Heart right ventricle (tissue), 16 donors: ENCODE measurements at regions of chr2 and their contacts with region 1.

Region 1: DNA sequence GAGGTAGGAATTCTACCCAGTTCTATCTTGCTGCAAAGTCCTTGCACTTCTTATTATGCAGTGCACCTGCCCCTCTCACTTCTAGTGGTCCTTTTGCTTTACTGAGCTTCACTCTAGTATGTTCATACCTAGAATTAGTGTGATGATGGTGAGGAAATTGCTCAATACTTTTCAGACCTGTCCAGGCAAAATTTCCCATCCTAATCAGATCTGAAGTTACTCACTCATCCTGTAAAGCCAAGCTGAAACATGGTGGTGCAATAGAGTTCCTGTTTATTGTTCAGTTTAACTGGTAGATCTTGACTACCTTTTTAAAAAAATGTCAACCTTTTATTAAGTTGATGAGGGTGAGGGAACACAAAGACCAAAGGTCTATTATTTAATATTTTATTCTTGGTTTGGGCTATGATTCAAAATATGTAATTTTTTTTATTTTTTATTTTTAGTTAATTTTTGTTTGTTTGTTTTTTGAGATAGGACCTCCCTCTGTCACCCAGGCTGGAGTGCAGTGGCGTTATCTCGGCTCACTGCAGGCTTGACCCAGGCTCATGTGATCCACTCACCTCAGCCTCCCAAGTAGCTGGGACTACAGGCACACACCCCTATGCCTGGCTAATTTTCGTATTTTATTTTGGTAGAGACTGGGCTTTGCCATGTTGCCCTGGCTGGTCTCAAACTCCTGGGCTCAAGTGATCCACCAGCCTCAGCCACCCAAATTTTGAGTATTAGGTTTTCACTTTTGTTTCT is 12.8 kb upstream of the FIGN start:
- DNase-seq: no peak
- ATAC-seq: no peak
- H3K4me3 ChIP-seq: no peak overlapping the region
- H3K27ac ChIP-seq: no peak overlapping the region
- H3K4me1 ChIP-seq: no peaks in the 10 kb centered on the region
- H3K27me3 ChIP-seq: no peaks in the 10 kb centered on the region
- CTCF ChIP-seq: no peak

Region 2: DNA sequence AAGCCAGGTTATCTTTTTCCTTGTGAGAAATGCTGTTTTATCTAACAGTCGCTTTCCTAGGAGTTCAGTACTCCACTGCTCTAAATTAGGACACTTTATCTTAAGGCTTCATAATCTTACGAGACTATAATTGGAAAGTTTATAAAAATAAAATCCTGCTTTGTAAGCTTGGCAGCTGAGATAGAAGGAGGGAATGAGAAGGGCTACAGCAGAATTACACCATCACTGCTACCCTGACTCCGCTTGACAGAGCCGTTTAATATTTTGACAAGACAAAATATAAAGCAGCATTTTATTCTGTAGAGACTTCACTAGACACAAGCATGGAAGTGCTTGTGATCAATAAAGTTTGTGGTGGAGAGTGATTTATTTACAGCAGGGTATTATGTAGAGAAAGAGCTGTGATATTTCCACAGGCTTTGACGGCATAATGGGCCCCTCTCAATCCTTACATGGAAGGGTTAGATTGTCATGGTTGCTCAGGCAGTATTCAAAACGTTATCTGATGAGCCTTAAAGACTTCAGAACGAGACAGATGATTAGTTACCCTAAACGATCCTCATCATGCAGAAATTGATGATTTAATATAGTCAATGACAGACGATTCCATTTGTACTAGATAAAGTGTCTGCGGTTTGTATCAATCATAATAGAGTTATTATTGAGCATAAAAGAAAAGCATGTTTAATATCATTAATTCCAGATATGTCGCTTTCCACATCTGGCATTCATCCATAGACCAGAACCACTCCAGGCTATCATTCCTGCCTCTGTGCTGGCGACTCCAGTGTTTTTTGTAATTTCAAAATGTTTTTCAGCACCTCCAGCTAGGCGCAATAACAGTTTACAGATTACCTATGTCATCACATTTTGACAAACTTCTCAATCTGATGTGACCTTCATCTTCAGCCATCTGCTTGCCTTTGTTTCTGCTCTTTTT is 255.0 kb before region 1 on chr2:
- intact Hi-C with region 1: loop called in 1 of 10 experiments (anchors 10 kb)
- DNase-seq: no peak
- ATAC-seq: peak; percentile 23 to 86 (median 54)
- H3K4me3 ChIP-seq: peak overlapping the region in 2 of 10 donors; percentile 8 to 9
- H3K27ac ChIP-seq: peak overlapping the region in 7 of 10 donors; percentile 1 to 44 (median 33)
- H3K4me1 ChIP-seq: peaks cover 0 to 15% (median 0%) of the 10 kb centered on the region in 9 donors
- H3K27me3 ChIP-seq: no peaks in the 10 kb centered on the region
- CTCF ChIP-seq: no peak

Region 3: GRCh38 chr2:163698857-163699256 is 49.7 kb before region 1 on chr2:
- intact Hi-C with region 1: no loop called
- DNase-seq: no peak
- ATAC-seq: peak in 4 of 8 donors; percentile 42 to 85 (median 58)
- H3K4me3 ChIP-seq: no peak overlapping the region
- H3K27ac ChIP-seq: peak overlapping the region in 5 of 10 donors; percentile 28 to 59 (median 38)
- H3K4me1 ChIP-seq: peaks cover 9 to 61% (median 38%) of the 10 kb centered on the region in 9 donors
- H3K27me3 ChIP-seq: no peaks in the 10 kb centered on the region
- CTCF ChIP-seq: no peak

Region 4: GRCh38 chr2:163800951-163801381 is 52.4 kb after region 1 on chr2:
- intact Hi-C with region 1: no loop called
- DNase-seq: no peak
- ATAC-seq: peak in 4 of 8 donors; percentile 28 to 49 (median 40)
- H3K4me3 ChIP-seq: no peak overlapping the region
- H3K27ac ChIP-seq: peak overlapping the region in 5 of 10 donors; percentile 15 to 41 (median 34)
- H3K4me1 ChIP-seq: peaks cover 0 to 33% (median 0%) of the 10 kb centered on the region in 9 donors
- H3K27me3 ChIP-seq: no peaks in the 10 kb centered on the region
- CTCF ChIP-seq: no peak

Region 5: DNA sequence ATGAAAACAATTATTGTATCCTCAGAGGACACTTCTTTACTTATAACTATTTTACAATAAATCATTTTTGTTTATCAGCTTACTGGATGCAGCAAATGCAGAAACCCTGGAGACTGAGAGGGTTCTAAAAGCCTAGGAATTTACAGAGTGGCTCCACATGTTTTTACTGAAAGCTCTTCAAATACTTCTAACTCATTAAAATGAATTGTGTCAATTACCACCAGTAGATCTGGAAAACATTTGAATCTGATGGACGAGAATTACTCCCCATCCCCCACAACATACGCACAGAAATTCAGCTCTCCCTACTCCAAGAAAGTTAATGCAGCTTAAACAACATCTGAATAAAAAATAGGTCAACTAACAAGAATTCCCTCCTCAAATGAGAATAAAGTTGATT is 307.0 kb after region 1 on chr2:
- intact Hi-C with region 1: loop called in 2 of 10 experiments (anchors 10 kb)
- DNase-seq: no peak
- ATAC-seq: no peak
- H3K4me3 ChIP-seq: no peak overlapping the region
- H3K27ac ChIP-seq: no peak overlapping the region
- H3K4me1 ChIP-seq: peaks cover 0 to 11% (median 3%) of the 10 kb centered on the region in 9 donors
- H3K27me3 ChIP-seq: no peaks in the 10 kb centered on the region
- CTCF ChIP-seq: no peak